HepG2 (cell line): ENCODE measurements at regions of chr6 and their contacts with region 1.

Region 1: GRCh38 chr6:37018198-37019064 is 13.0 kb downstream of the FGD2 start:
- DNase-seq: peak; percentile 90
- ATAC-seq: peak; percentile 95
- H3K4me3 ChIP-seq: no peak overlapping the region
- H3K27ac ChIP-seq: no peak overlapping the region
- H3K4me1 ChIP-seq: peaks cover 39% of the 10 kb centered on the region
- H3K27me3 ChIP-seq: peaks cover 4 to 15% of the 10 kb centered on the region in 2 experiments; a peak in 2 of 5 replicates
- CTCF ChIP-seq: peak; percentile 92
- EP300 ChIP-seq: no peak
- POLR2A ChIP-seq: no peak
- RAD21 ChIP-seq: peak; percentile 82

Region 2: GRCh38 chr6:36765594-36766398 is 252.6 kb before region 1 on chr6:
- CTCF ChIA-PET with region 1: interaction called, 30 read pairs
- POLR2A ChIA-PET with region 1: no interaction called
- in situ Hi-C with region 1: loop called (anchors 10 kb)
- intact Hi-C with region 1: loop called (anchors 1 kb)
- DNase-seq: peak; percentile 76
- ATAC-seq: peak; percentile 93
- H3K4me3 ChIP-seq: no peak overlapping the region
- H3K27ac ChIP-seq: no peak overlapping the region
- H3K4me1 ChIP-seq: no peaks in the 10 kb centered on the region
- H3K27me3 ChIP-seq: peaks cover 8 to 60% of the 10 kb centered on the region in 2 experiments
- CTCF ChIP-seq: peak; percentile 98
- EP300 ChIP-seq: no peak
- POLR2A ChIP-seq: no peak
- RAD21 ChIP-seq: peak; percentile 96

Region 3: GRCh38 chr6:36977470-36977941 is 40.9 kb before region 1 on chr6:
- CTCF ChIA-PET with region 1: interaction called, 15 read pairs
- POLR2A ChIA-PET with region 1: no interaction called
- in situ Hi-C with region 1: no loop called
- intact Hi-C with region 1: loop called (anchors 2 kb)
- DNase-seq: no peak
- ATAC-seq: peak; percentile 67
- H3K4me3 ChIP-seq: no peak overlapping the region
- H3K27ac ChIP-seq: no peak overlapping the region
- H3K4me1 ChIP-seq: no peaks in the 10 kb centered on the region
- H3K27me3 ChIP-seq: no peaks in the 10 kb centered on the region
- CTCF ChIP-seq: peak; percentile 64
- EP300 ChIP-seq: no peak
- POLR2A ChIP-seq: no peak
- RAD21 ChIP-seq: no peak

Region 4: GRCh38 chr6:37029249-37029971 is 11.0 kb after region 1 on chr6:
- CTCF ChIA-PET with region 1: interaction called, 19 read pairs
- POLR2A ChIA-PET with region 1: no interaction called
- in situ Hi-C with region 1: no loop called
- intact Hi-C with region 1: no loop called
- DNase-seq: peak; percentile 84
- ATAC-seq: peak; percentile 89
- H3K4me3 ChIP-seq: no peak overlapping the region
- H3K27ac ChIP-seq: no peak overlapping the region
- H3K4me1 ChIP-seq: peaks cover 43% of the 10 kb centered on the region
- H3K27me3 ChIP-seq: peaks cover 4 to 47% of the 10 kb centered on the region in 2 experiments
- CTCF ChIP-seq: peak; percentile 97
- EP300 ChIP-seq: no peak; a peak in 1 of 4 replicates
- POLR2A ChIP-seq: no peak
- RAD21 ChIP-seq: peak; percentile 99

Region 5: GRCh38 chr6:37177077-37177934 is 158.9 kb after region 1 on chr6:
- CTCF ChIA-PET with region 1: interaction called, 41 read pairs
- POLR2A ChIA-PET with region 1: interaction called, 10 read pairs
- in situ Hi-C with region 1: loop called (anchors 10 kb)
- intact Hi-C with region 1: loop called (anchors 1 kb)
- DNase-seq: no peak
- ATAC-seq: peak; percentile 73
- H3K4me3 ChIP-seq: no peak overlapping the region
- H3K27ac ChIP-seq: no peak overlapping the region
- H3K4me1 ChIP-seq: peaks cover 24% of the 10 kb centered on the region
- H3K27me3 ChIP-seq: no peaks in the 10 kb centered on the region; a peak in 1 of 5 replicates
- CTCF ChIP-seq: peak; percentile 41
- EP300 ChIP-seq: no peak
- POLR2A ChIP-seq: no peak
- RAD21 ChIP-seq: no peak